AG04449 (cell line): ENCODE measurements at regions of chr2 and their contacts with region 1.

Region 1: DNA sequence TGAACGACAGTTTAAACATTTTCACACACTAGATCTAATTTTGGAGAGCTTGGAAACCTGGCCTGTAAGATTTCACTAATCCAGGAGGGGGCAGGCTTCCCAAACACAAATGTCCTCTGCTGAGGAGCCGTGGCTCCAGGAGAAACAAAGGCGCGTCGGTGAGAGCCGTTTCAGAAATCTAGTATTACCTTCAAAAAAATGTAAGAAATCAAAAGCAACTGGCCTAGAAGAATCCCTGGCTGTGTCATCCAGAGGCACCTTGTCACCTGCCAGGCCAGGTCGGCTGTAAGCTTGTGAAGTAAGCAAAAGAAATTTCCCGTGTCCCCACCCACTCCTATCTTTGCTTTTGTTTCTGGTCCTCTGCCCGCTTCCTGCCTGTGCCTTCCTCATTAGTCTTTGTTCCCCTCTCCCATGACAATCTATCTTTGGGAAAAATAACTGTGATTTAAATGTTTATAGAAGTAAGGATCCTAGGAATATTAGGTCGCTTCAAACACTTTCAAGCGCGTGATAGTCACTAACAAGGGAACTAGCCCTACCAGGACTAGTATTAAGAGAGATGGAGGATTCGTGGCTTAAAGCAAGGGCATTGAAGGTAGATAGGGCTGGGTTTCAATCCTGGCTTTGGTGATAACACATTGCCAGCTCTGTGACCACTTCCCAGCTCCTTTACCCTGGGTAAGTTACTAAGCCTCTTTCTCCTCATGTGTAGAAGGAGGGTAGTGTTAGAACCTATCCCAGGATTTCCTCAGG is 99.5 kb upstream of the STK39 start:
- DNase-seq: no peak
- H3K4me3 ChIP-seq: peak overlapping the region; percentile 56
- CTCF ChIP-seq: peak; percentile 63

Region 2: GRCh38 chr2:168375195-168375798 is 28.4 kb after region 1 on chr2:
- CTCF ChIA-PET with region 1: no interaction called
- POLR2A ChIA-PET with region 1: no interaction called
- DNase-seq: no peak
- H3K4me3 ChIP-seq: no peak overlapping the region
- CTCF ChIP-seq: no peak

Region 3: GRCh38 chr2:168501466-168502065 is 154.7 kb after region 1 on chr2:
- CTCF ChIA-PET with region 1: no interaction called
- POLR2A ChIA-PET with region 1: no interaction called
- DNase-seq: no peak
- H3K4me3 ChIP-seq: no peak overlapping the region
- CTCF ChIP-seq: no peak

Region 4: GRCh38 chr2:168687314-168687713 is 340.4 kb after region 1 on chr2:
- CTCF ChIA-PET with region 1: interaction called, 58 read pairs
- POLR2A ChIA-PET with region 1: no interaction called
- DNase-seq: no peak
- H3K4me3 ChIP-seq: no peak overlapping the region
- CTCF ChIP-seq: no peak

Region 5: GRCh38 chr2:168699844-168700417 is 353.0 kb after region 1 on chr2:
- CTCF ChIA-PET with region 1: interaction called, 87 read pairs
- POLR2A ChIA-PET with region 1: no interaction called
- DNase-seq: peak; percentile 31
- H3K4me3 ChIP-seq: no peak overlapping the region
- CTCF ChIP-seq: no peak

Region 6: GRCh38 chr2:168705534-168706470 is 358.9 kb after region 1 on chr2:
- CTCF ChIA-PET with region 1: interaction called, 87 read pairs
- POLR2A ChIA-PET with region 1: no interaction called
- DNase-seq: no peak
- H3K4me3 ChIP-seq: no peak overlapping the region
- CTCF ChIP-seq: peak; percentile 9

Region 7: DNA sequence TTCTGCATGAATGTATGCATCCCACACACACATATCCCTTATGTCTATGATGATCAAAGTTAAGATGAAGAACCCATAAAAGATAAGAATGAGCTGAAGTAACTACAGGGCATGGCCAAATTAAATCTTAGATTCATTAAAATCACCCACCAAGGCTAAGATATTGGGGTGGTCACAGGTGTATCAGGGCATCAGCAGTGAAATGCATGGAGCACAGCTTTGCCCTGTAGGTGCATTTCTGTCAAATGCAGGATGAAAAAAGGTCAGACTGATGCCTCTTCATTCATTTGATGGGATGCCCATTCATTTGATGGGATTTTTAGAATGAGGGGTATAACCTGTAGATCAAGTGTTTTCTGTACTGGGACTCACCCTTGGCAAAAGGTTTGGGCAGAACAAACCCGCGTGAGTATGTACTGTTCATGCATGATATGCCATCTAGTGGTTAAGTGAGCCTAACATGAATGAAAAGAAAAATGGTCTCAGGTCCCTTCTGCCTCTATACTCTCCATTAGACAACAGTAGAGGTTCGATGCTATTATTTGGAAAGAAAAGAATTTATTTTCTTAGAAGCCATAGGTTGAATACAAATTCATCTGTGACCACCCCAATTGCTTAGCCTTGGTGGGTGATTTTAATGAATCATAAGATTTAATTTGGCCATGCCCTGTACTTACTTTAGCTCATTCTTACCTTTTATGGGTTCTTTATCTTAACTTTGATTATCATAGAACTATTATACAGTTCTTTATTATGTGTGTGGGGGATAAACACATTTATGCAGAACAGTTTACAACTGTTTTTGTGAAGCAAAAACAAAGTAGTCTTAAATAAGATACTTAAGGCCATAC is 412.3 kb after region 1 on chr2:
- CTCF ChIA-PET with region 1: interaction called, 72 read pairs
- POLR2A ChIA-PET with region 1: no interaction called
- DNase-seq: peak; percentile 14
- H3K4me3 ChIP-seq: no peak overlapping the region
- CTCF ChIP-seq: peak; percentile 66

Region 8: DNA sequence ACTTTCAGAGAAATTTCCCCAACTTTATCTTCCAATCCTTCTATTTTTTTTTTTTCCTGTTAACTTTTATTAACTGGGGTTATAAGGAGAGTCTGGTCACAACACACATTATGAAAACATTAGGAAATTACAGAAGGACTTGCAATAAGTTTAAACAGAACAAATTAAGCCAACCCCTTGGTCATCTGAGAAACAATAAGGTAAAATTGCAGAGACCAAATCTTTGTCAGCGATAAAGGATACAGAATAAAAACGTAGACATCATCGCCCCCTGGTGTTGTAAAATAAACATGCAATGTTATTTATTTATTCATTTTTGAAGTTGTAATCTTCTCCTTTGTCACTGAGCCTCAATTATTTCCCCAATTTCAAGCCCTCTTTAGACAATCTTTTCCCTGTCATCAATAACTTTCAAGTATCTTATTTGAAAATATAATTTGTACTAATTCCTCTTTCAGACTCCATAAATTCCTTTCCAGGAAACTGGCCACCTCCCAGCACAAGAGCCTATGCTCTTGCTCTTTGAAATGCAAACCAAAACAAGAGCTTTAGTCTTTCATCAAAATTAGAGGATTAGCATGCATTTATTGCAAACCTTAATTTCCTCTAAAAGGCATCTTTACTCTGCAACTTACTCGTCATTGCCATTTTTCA is 573.7 kb after region 1 on chr2:
- CTCF ChIA-PET with region 1: interaction called, 26 read pairs
- POLR2A ChIA-PET with region 1: no interaction called
- DNase-seq: no peak
- H3K4me3 ChIP-seq: no peak overlapping the region
- CTCF ChIP-seq: peak; percentile 27